ENCODE measurements at regions of chr7 and their contacts with region 1.

Region 1: GRCh38 chr7:75776295-75776971 is 4.4 kb upstream of the CCL26 start:
- DNase-seq: no peak
- H3K4me3 ChIP-seq: no peak overlapping the region
- H3K27ac ChIP-seq: no peak overlapping the region
- H3K4me1 ChIP-seq: peaks cover 8% of the 10 kb centered on the region
- H3K27me3 ChIP-seq: no peaks in the 10 kb centered on the region
- CTCF ChIP-seq: peak in 1 of 3 donors; percentile 31
- EP300 ChIP-seq: no peak
- POLR2A ChIP-seq: no peak

Region 2: DNA sequence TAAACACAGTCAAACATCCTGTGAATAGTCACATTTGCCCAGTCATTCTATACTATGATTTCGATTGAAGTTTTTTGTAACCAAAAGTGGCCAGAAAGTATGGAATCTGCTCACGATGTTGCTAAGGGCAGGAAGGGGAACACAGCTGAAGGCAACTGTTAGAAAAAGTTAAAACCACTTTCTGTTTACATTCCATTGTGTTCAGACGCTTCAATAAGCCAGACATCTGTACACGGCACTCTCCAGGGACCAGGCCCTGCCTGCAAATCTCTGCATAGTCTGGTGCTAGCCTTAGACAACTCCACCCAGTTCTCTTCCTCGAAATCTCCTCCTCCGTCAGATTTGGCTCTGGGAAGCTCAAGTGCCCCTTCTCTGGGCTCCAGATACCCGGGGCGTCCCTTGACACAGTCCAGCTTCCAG is 235.0 kb after region 1 on chr7:
- intact Hi-C with region 1: loop called in 1 of 4 experiments (anchors 10 kb)
- DNase-seq: peak; percentile 48 to 77 (median 58)
- H3K4me3 ChIP-seq: no peak overlapping the region
- H3K27ac ChIP-seq: peak overlapping the region in 1 of 2 donors; percentile 46
- H3K4me1 ChIP-seq: peaks cover 22% of the 10 kb centered on the region
- H3K27me3 ChIP-seq: no peaks in the 10 kb centered on the region
- CTCF ChIP-seq: no peak
- EP300 ChIP-seq: no peak
- POLR2A ChIP-seq: no peak

Measured in ovary (tissue), 10 donors.